ENCODE measurements at regions of chr14 and their contacts with region 1.

Region 1: DNA sequence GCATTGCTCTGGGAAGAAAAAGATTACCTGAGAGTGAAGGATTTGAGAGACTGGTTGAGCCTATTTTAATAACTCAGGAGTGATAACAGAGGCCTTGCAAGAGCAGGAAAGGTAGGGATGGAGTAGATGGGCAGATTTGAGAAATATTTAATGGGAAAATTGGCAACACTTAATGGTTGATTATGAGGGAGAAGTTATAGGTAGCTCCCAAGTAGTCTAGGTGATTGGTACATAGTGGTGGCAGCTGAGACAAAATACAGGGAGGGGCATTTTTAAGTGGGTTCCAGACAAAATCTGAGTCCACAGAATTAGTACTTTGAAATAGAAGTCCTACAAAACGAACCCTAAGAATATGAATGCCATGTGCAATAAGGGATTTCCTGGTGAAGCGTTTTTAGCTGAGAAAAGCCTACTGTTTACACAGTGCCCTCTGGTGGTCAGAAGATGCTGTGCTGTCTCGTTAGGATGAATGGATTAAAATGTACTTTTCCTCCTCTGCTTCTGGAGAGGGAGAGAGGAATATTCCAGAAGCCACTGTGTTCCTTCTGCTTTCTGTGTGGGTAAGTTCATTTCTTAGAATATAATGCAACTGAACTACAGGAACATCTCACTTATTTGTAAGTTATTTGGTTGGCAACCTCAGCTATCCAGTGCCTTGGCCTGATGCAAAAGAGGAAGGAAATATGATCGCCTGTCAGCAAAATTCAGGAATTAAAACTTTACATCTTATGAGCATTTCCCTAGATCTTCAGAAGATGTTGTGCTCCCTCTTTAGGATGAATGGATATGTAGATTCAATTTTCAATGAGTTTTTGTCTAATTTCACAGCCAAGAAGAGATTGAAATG is 6.5 kb downstream of the ZBTB1 start:
- DNase-seq: peak; percentile 36 to 88 (median 56)
- ATAC-seq: peak; percentile 63
- H3K4me3 ChIP-seq: no peak overlapping the region
- H3K4me3 Mint-ChIP-seq: peak overlapping the region; percentile 43
- H3K27ac ChIP-seq: peak overlapping the region in 1 of 2 donors; percentile 27
- H3K27ac Mint-ChIP-seq: peak overlapping the region; percentile 100
- H3K4me1 ChIP-seq: peaks cover 56% of the 10 kb centered on the region
- H3K4me1 Mint-ChIP-seq: peaks cover 93% of the 10 kb centered on the region
- H3K27me3 ChIP-seq: no peaks in the 10 kb centered on the region
- H3K27me3 Mint-ChIP-seq: no peaks in the 10 kb centered on the region
- CTCF ChIP-seq: peak; percentile 88

Region 2: DNA sequence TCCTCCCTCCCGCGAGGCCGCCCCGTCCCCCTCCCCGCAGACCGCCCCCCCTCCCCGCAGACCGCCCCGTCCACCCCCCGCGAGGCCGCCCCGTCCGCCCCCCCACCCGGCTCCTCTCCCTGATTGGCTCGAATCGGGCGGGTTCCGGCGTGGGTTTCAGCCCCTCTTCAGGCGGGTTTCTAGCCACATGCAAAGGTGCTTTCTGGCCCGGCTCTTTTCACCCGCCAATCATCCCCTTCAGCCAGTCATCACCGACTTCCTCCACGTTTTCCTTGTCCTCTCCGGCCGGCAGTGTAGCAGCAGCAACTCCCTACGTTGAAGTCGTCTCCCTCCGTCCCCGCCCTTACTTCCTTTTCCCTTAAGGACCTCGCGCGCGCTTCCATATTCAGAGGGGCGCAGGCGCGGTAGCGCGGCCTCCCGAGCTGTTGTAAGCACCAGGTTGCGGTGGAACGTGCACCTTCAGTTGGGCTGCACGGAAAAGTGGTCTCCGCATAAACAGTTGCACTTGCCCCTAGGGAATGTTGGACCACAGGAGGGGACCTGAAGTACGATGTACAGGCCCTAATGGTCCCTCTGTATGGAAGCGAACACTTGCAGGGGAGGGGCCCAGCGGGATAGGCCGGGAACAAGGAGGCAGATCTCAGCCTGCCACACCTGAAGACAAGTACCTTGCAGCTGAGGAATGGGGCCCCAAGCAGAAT is 172.3 kb before region 1 on chr14:
- CTCF ChIA-PET with region 1: interaction called, 6 read pairs
- POLR2A ChIA-PET with region 1: no interaction called
- intact Hi-C with region 1: loop called in 1 of 2 experiments (anchors 2 kb)
- DNase-seq: peak; percentile 58 to 95 (median 80)
- ATAC-seq: peak; percentile 79
- H3K4me3 ChIP-seq: peak overlapping the region; percentile 64
- H3K4me3 Mint-ChIP-seq: peak overlapping the region; percentile 97
- H3K27ac ChIP-seq: peak overlapping the region; percentile 57 to 64
- H3K27ac Mint-ChIP-seq: peak overlapping the region; percentile 84
- H3K4me1 ChIP-seq: peaks cover 13% of the 10 kb centered on the region
- H3K4me1 Mint-ChIP-seq: peaks cover 25% of the 10 kb centered on the region
- H3K27me3 ChIP-seq: no peaks in the 10 kb centered on the region
- H3K27me3 Mint-ChIP-seq: no peaks in the 10 kb centered on the region
- CTCF ChIP-seq: no peak

Region 3: DNA sequence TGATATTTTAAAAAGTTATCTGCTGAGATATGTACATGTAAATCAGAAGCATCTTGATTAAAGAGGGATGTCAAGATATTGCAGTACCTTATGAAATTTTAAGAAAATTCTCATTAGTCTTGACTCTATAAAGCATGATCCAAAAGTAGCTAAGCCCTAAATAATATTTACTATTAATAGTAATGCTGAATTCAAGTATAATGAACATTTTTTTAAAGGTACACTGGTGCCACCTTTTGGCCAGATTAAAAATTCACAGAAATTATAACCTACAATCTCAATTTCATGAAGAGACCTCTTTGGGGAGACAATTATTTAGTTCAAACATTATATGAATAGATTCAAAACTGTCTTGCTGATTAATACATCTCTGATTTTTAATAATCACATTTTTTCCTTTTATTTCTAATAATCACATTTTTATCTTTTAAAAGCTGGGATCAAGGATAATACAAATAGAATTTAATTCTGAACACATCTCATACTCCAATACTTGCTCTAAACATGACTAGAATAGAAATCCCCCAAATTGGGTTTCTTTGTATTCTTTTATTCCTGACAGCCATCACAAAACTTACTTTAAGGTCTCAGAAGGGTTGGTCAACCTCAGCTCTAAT is 32.3 kb before region 1 on chr14:
- CTCF ChIA-PET with region 1: interaction called, 17 read pairs
- POLR2A ChIA-PET with region 1: interaction called, 112 read pairs
- intact Hi-C with region 1: loop called (anchors 2 kb)
- DNase-seq: peak in 4 of 14 experiments; percentile 20 to 63 (median 57)
- ATAC-seq: no peak
- H3K4me3 ChIP-seq: no peak overlapping the region
- H3K4me3 Mint-ChIP-seq: no peak overlapping the region
- H3K27ac ChIP-seq: no peak overlapping the region
- H3K27ac Mint-ChIP-seq: peak overlapping the region; percentile 25
- H3K4me1 ChIP-seq: no peaks in the 10 kb centered on the region
- H3K4me1 Mint-ChIP-seq: peaks cover 27% of the 10 kb centered on the region
- H3K27me3 ChIP-seq: no peaks in the 10 kb centered on the region
- H3K27me3 Mint-ChIP-seq: no peaks in the 10 kb centered on the region
- CTCF ChIP-seq: peak; percentile 75

Region 4: DNA sequence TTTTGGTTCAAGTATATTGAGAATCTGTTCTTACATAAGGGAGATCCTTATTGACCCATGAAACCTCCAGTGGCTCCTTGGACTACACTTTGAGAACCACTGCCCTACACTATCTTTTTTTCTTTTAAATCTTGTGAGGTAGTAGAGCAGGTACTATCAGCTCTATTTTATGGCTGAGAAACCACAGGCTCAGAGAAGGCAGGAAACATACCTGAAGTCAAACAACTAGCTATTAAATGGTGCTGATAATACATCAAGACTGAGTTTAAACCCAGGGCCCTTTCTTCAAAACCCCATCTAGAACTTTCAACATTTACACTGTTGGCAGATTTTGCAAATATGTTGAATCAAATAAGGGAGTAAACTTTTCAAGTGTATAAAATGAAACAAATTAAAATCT is 14.3 kb before region 1 on chr14:
- CTCF ChIA-PET with region 1: interaction called, 55 read pairs
- POLR2A ChIA-PET with region 1: interaction called, 112 read pairs
- intact Hi-C with region 1: no loop called
- DNase-seq: no peak
- ATAC-seq: no peak
- H3K4me3 ChIP-seq: no peak overlapping the region
- H3K4me3 Mint-ChIP-seq: peak overlapping the region; percentile 50
- H3K27ac ChIP-seq: peak overlapping the region in 1 of 2 donors; percentile 27
- H3K27ac Mint-ChIP-seq: peak overlapping the region; percentile 71
- H3K4me1 ChIP-seq: peaks cover 45% of the 10 kb centered on the region
- H3K4me1 Mint-ChIP-seq: peaks cover 76% of the 10 kb centered on the region
- H3K27me3 ChIP-seq: no peaks in the 10 kb centered on the region
- H3K27me3 Mint-ChIP-seq: no peaks in the 10 kb centered on the region
- CTCF ChIP-seq: no peak

Region 5: DNA sequence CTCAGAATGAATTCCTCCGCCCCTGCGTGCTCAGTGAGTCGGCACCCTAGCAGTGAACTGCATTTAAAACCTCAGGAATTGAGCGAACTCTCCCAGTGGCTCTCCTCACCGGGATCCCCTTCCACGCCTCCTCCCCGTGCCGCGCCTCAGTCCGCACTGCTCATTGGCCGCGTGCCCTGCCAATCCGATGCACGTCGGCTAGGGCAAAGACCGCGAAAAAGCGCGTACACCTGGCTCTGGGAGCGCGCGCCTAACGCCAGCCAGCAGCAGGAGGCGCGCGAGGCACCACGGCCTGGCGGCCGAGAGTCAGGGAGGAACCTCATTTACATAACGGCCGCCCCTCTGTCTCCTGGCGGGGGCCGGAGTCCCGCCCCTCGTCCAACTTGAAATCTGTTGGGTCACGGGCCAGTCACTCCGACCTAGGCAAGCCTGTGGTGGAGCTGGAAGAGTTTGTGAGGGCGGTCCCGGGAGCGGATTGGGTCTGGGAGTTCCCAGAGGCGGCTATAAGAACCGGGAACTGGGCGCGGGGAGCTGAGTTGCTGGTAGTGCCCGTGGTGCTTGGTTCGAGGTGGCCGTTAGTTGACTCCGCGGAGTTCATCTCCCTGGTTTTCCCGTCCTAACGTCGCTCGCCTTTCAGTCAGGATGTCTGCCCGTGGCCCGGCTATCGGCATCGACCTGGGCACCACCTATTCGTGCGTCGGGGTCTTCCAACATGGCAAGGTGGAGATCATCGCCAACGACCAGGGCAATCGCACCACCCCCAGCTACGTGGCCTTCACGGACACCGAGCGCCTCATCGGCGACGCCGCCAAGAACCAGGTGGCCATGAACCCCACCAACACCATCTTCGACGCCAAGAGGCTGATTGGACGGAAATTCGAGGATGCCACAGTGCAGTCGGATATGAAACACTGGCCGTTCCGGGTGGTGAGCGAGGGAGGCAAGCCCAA is 29.4 kb after region 1 on chr14 and contains the start of gene HSPA2:
- CTCF ChIA-PET with region 1: interaction called, 9 read pairs
- POLR2A ChIA-PET with region 1: interaction called, 67 read pairs
- intact Hi-C with region 1: loop called in 1 of 2 experiments (anchors 2 kb)
- DNase-seq: peak; percentile 85 to 98 (median 92)
- ATAC-seq: peak; percentile 84
- H3K4me3 ChIP-seq: peak within 1 kb of the TSS; percentile 86
- H3K4me3 Mint-ChIP-seq: peak within 1 kb of the TSS; percentile 98
- H3K27ac ChIP-seq: no peak within 1 kb of the TSS
- H3K27ac Mint-ChIP-seq: peak within 1 kb of the TSS; percentile 78
- H3K4me1 ChIP-seq: peaks cover 41% of the 10 kb centered on the region
- H3K4me1 Mint-ChIP-seq: peaks cover 43% of the 10 kb centered on the region
- H3K27me3 ChIP-seq: no peaks in the 10 kb centered on the region
- H3K27me3 Mint-ChIP-seq: peaks cover 6% of the 10 kb centered on the region
- CTCF ChIP-seq: peak; percentile 72
- total RNA-seq, gene HSPA2: 1.5 to 1.9 TPM

Region 6: DNA sequence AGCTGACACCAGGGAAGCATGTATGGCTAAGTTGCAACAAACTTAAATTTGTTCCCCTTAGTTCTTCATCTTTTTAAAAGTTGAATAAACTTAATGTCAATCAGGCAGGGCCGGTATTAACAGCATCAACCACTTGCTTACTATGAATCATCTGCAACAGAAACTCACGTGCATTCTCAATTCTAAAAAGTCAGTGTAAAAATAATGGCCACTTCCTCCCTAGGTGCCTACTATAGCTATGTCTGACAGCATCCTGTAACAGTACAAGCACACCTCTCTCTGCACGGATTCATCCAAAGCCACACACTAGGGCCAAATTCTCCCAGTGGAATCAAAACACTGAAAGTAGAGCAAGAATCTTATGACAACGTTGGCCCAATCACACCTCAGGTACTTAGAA is 87.4 kb after region 1 on chr14:
- CTCF ChIA-PET with region 1: no interaction called
- POLR2A ChIA-PET with region 1: no interaction called
- intact Hi-C with region 1: no loop called
- DNase-seq: no peak
- ATAC-seq: no peak
- H3K4me3 ChIP-seq: no peak overlapping the region
- H3K4me3 Mint-ChIP-seq: no peak overlapping the region
- H3K27ac ChIP-seq: no peak overlapping the region
- H3K27ac Mint-ChIP-seq: no peak overlapping the region
- H3K4me1 ChIP-seq: no peaks in the 10 kb centered on the region
- H3K4me1 Mint-ChIP-seq: no peaks in the 10 kb centered on the region
- H3K27me3 ChIP-seq: peaks cover 0 to 5% of the 10 kb centered on the region in 2 experiments
- H3K27me3 Mint-ChIP-seq: peaks cover 16% of the 10 kb centered on the region
- CTCF ChIP-seq: no peak

Region 7: DNA sequence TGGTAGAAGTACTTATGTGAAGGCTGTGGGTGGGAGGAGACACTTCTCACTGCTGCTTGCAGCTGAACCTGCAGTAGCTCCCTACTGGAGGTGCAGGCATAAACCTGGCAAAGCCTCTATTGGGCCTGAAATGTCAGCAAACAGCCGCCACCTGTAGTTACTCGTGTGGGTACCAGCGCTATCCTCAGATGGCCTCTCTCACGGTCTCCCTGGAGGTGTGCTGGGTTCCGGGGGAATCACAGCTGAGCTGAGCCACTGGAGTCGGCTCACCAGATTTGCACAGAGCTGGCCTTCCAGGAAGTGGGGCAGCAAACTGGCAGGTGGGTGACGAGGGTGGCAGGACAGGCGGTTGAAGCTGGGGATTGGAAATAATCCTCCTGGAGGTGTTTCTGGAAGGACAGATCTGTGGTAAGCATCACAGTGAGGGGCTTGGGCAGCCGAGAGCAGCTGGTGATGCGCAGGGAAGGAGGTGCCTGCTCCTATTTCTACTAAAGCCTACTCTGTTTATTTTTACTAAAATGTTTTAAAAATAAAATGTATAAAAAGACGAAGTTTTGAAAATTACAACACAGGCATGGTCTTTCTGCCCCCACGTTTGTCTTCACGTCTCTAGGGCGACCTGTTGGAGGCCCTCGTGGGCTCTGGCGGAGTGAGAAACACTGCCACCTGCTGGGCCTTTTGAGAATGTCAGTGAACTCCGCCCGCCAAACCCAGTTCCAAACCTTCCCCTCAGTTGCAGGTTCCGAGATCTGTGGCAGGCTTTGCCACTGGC is 125.3 kb after region 1 on chr14:
- CTCF ChIA-PET with region 1: no interaction called
- POLR2A ChIA-PET with region 1: no interaction called
- intact Hi-C with region 1: no loop called
- DNase-seq: peak; percentile 44 to 83 (median 65)
- ATAC-seq: peak; percentile 95
- H3K4me3 ChIP-seq: no peak overlapping the region
- H3K4me3 Mint-ChIP-seq: no peak overlapping the region
- H3K27ac ChIP-seq: no peak overlapping the region
- H3K27ac Mint-ChIP-seq: no peak overlapping the region
- H3K4me1 ChIP-seq: peaks cover 6% of the 10 kb centered on the region
- H3K4me1 Mint-ChIP-seq: no peaks in the 10 kb centered on the region
- H3K27me3 ChIP-seq: peaks cover 0 to 9% of the 10 kb centered on the region in 2 experiments
- H3K27me3 Mint-ChIP-seq: peaks cover 11% of the 10 kb centered on the region
- CTCF ChIP-seq: peak; percentile 92